ENCODE measurements at regions of chr14 and their contacts with region 1.

Region 1: DNA sequence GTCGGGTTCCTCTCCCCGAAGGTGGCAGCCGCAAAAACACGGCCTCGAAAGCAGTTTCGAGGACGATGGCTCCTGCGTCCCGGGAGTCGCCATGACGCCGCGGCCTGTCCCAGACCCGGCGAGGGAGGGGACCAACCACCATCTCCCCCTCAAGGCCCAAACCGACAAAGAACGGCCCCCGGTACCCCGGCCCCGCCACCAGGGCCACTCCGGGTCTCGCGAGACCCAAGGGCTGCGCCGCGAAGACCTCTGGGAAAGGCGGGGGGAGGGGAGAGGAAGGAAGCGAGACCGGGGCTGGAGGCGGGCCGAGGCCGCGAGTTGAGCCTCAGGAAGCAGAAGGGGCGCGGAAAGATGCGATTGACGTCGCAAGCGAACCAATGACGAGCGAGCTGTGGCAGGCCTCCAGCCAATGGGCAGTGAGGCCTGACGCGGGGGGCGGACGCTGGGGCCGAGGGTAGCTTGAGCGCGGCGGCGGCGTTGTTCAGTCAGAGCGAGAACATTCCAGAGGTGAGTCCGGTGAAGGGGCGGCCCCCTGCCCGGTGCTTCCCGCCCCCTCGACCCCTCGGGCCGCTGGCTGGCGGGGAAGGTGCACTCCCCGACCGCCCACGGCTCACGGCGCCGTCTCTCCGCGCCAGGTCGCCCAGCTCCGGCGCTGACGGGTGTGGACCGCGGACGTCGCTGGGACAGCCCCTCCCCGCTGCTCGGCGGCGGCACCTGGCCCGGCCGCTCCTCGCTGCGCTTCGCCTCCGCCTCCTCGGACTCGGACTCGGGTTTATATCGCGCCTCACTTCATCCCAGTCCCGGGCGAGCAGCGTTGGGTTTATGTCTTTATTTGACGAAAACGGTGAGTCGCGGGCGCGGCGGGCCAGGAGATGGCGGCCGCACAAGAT is at the start of gene EIF5:
- DNase-seq: peak; percentile 98
- H3K4me3 Mint-ChIP-seq: peak within 1 kb of the TSS; percentile 90
- H3K27ac Mint-ChIP-seq: peak within 1 kb of the TSS; percentile 97
- H3K4me1 Mint-ChIP-seq: peaks cover 43% of the 10 kb centered on the region
- H3K27me3 Mint-ChIP-seq: peaks cover 7% of the 10 kb centered on the region
- total RNA-seq, gene EIF5: 279 and 292 TPM in 2 replicates

Region 2: DNA sequence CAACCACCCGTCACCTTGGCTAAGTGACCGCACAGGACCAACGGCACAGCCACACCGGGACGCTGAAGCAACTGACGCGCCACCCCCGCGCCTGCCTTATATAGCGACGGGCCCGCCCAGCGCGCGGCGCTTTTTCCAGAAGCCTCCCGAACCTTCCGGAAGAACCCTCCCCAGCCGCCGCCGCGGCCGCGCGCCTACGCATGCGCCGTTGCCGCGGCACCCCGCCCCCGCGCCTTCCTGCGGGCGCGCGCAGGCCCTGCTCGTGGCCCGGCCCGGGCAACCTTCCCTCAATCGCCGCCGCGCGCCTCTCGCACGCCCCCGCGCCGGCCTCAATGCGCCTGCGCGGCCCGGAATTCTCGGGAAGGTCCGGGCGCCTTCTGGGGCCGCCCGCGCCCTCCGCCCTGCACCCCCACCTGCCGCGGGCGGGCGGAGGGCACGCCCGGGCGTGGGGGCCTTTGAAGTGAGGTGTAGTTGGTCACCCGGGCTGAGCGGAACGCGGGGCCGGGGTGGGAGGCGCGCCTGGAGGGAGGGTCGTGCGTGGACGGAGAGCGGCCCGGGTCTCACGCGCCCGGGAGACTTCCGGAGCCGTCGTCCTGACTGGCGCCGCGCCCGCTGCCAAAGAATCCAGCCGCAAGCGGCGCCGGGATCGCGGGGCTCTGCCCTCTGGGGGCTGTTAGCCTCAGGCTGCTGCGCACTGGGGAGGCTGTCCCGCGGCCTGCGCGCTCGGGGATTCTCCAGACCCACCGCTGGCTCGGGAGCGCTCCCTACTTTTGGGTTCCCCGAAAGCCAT is 1246.8 kb before region 1 on chr14 and contains the start of gene HSP90AA1:
- intact Hi-C with region 1: loop called (anchors 2 kb)
- DNase-seq: peak; percentile 94
- H3K4me3 Mint-ChIP-seq: peak within 1 kb of the TSS; percentile 99
- H3K27ac Mint-ChIP-seq: peak within 1 kb of the TSS; percentile 97
- H3K4me1 Mint-ChIP-seq: peaks cover 63% of the 10 kb centered on the region
- H3K27me3 Mint-ChIP-seq: no peaks in the 10 kb centered on the region
- total RNA-seq, gene HSP90AA1: 993 and 995 TPM in 2 replicates

Region 3: GRCh38 chr14:102362545-102363181 is 971.3 kb before region 1 on chr14 and contains the starts of genes CINP and TECPR2:
- intact Hi-C with region 1: loop called (anchors 1 kb)
- DNase-seq: peak; percentile 92
- H3K4me3 Mint-ChIP-seq: peak within 1 kb of the TSS; percentile 93
- H3K27ac Mint-ChIP-seq: peak within 1 kb of the TSS; percentile 91
- H3K4me1 Mint-ChIP-seq: peaks cover 32% of the 10 kb centered on the region
- H3K27me3 Mint-ChIP-seq: no peaks in the 10 kb centered on the region
- total RNA-seq, gene CINP: 39.6 and 42.5 TPM in 2 replicates
- total RNA-seq, gene TECPR2: 9.5 and 10.1 TPM in 2 replicates

Region 4: DNA sequence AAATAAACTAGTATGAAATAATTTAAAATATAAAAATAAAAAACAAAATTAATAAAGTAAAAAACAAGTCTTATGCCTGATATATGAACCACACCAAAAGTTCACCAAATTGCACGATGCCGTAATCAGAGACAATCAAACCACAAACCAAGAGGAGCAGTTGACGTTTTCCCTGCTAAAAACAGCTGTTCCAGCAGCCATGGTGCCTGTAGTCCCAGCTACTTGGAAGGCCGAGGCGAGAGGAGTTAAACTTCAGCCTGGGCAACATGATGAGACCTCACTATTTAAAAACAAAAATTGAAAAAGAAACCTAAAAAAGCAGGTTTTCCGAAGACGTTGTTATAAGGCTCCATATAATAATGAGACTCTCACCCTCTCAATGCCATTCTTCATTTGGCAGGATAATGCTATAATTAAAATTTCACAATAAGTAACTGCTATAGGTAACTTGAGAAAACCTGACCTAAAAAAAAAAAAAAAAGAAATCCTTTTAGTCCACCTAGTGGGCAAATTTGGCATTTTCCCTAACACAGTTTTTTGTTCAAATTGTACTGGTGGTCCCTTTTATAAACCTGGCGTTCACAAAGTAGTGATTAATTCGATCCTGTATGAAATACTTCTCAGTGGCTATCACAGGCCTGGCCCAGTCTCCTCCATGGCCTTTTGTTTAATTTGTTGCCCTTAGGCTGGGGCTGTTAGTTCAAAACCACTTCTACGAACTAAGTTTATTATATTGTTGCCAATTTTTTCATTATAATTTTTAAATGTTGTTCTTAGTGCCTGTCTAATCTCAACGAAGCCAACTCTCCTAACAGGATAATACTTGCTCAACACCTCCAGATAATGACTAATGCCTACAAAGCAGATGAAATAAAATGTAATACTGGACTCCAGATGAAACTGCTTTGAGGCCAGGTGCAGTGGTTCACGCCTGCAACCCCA is 148.7 kb before region 1 on chr14:
- intact Hi-C with region 1: no loop called
- DNase-seq: no peak
- H3K4me3 Mint-ChIP-seq: no peak overlapping the region
- H3K27ac Mint-ChIP-seq: no peak overlapping the region
- H3K4me1 Mint-ChIP-seq: no peaks in the 10 kb centered on the region
- H3K27me3 Mint-ChIP-seq: peaks cover 40% of the 10 kb centered on the region

Region 5: GRCh38 chr14:103343905-103344797 is 10.2 kb after region 1 on chr14:
- intact Hi-C with region 1: loop called (anchors 1 kb)
- DNase-seq: no peak
- H3K4me3 Mint-ChIP-seq: no peak overlapping the region
- H3K27ac Mint-ChIP-seq: no peak overlapping the region
- H3K4me1 Mint-ChIP-seq: peaks cover 7% of the 10 kb centered on the region
- H3K27me3 Mint-ChIP-seq: no peaks in the 10 kb centered on the region

Region 6: DNA sequence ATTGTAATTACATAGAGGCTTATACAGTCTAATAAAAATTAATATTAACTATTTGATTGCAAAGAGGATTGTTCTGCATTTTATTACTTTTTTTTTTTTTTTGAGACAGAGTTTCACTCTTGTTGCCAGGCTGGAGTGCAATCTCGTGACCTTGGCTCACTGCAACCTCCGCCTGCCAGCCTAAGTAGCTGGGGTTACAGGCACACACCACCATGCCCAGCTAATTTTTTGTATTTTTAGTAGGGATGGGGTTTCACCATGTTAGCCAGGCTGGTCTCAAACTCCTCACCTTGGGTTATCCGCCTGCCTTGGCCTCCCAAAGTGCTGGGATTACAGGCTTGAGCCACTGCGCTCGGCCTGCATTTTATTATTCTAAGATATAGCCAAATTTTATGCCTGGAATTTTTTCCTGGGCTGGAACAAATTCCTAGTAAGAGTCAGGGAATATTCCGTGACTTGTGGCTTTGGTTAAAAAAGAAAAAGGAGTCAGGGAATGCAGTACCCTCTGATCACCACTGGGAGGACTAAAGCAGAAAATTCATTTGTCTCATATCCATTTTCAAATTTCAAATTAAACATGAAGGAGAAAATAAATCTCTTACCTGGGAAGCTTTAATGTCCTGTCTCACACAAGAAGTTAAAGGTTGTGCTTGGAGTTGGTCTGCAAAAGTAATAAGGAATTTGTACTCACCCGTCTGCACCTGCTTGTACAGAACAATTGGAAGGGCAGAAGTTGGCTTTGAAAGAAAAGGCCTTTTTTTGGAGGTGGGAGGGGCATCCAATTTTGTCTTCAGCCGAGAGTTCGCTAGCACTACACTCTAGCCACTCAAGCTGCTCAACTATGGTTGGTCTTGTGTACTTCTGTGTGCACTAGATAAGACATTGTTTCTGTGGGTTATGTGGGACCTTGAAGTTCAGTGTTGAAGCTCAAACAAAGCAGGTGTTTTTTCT is 60.0 kb after region 1 on chr14:
- intact Hi-C with region 1: loop called (anchors 2 kb)
- DNase-seq: no peak
- H3K4me3 Mint-ChIP-seq: peak overlapping the region; percentile 0
- H3K27ac Mint-ChIP-seq: no peak overlapping the region
- H3K4me1 Mint-ChIP-seq: peaks cover 43% of the 10 kb centered on the region
- H3K27me3 Mint-ChIP-seq: no peaks in the 10 kb centered on the region

Region 7: DNA sequence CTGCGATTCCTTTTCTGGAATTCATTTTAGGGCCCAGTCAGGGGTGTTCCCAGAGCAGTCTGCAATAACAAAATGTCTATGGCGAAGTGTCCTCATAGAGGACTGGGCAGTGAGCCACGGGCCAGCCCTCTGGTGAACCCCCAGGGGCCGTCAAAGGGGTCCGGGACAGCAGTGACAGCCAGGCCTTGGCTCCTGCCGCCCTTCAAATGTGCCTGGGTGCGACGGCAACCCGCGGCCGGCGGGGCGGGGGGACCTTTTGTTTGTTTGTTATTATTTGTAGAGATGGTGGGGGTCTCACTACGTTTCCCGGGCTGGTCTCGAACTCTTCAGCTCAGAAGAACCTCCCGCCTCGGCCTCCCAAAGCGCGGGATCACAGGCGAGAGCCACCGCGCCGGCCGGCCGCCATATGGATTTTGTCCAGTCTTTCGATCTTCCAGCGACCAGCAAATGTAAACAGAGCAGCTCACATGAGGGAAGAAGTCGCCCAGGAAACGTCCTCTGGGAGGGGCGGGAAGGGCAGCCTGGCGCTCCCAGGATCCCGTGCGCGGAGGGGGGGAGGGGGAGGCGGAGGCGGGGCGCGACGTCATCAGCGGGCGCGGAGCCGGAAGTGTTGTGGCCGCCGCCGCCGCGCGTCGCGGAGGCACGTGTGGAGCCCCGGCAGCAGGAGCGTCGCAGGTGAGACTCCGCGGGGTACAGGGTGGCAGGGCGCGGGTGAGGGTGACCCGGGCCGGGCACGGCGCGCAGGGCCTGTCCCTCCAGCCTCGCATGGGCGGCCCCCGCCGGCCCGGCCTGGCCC is 194.8 kb after region 1 on chr14 and contains the start of gene TRMT61A:
- intact Hi-C with region 1: loop called (anchors 10 kb)
- DNase-seq: peak; percentile 66
- H3K4me3 Mint-ChIP-seq: peak within 1 kb of the TSS; percentile 99
- H3K27ac Mint-ChIP-seq: peak within 1 kb of the TSS; percentile 96
- H3K4me1 Mint-ChIP-seq: peaks cover 29% of the 10 kb centered on the region
- H3K27me3 Mint-ChIP-seq: peaks cover 8% of the 10 kb centered on the region
- total RNA-seq, gene TRMT61A: 23.4 and 23.7 TPM in 2 replicates

Region 8: DNA sequence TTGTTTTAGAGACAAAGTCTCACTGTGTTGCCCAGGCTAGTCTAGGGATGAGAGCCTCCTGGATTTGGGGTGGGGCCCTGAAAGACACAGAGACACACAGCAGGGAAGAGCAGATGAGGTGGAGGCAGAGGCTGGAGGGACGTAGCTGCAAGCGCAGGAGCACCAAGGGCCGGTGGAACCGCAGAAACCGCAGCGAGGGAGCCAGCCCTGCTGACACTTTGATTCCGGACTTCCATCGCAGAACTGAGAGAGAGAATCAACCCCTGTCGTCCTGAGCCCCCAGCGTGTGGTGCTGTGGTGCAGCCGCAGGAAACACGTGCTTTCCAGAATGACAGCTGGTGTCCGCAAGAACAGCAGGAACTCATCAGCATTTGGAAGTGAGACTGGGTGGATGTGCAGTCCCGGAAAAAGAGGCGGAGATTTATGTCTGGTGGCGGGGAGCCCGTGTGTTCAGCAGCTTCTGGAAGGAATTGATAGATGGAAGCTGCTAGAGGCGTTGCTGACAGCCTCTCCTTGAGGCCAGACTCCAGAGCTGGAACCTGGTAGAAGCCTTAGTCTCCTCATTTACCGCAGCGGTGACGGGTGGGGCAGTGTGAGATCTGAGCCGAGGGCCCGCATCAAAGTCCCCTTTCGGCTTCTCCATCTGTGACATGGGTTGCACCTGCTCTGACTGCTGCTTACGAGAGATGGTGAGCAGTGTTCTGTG is 273.1 kb after region 1 on chr14:
- intact Hi-C with region 1: no loop called
- DNase-seq: peak; percentile 57
- H3K4me3 Mint-ChIP-seq: peak overlapping the region; percentile 79
- H3K27ac Mint-ChIP-seq: peak overlapping the region; percentile 77
- H3K4me1 Mint-ChIP-seq: peaks cover 21% of the 10 kb centered on the region
- H3K27me3 Mint-ChIP-seq: peaks cover 17% of the 10 kb centered on the region

Region 9: DNA sequence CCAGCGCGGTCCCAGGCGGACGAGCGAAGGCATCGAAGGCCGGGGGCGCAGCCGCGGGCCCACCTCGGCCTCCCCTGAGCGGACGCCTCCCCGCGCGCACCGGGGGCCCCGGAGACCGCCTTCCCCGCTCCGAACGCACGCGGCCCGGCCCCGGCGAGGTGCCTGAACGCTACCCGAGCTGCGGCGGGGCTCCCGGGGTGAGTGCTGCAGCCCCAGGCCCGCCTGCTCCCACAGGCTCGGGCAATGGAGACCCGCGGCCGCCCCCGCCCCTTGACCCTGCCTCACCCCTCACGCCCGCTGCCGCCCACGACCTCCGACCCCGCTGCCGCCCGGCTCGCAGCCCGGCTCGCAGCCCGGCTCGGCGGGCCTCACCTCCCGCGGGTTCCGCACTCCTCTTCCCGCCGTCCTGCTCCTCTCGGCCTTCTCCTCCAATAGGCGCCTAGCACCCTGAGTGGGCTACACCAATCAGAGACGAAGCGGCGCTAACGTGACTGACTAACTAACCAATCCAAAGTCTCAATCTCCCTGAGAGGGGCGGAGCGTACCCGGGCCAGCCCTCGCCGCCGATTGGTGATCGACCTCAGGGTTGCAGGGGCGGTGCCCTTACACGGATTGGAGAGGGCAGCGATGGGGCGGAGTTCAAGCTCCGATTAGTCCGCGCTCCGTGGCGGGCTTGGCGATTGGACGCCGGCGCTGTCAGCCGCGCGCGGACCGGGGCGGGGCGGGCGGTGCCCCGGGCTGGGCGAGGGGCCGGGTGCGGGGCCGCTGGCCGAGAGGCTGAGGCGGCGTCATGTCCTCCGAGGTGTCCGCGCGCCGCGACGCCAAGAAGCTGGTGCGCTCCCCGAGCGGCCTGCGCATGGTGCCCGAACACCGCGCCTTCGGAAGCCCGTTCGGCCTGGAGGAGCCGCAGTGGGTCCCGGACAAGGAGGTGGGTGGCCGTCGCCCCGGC is 381.3 kb after region 1 on chr14 and contains the starts of genes XRCC3 and ZFYVE21:
- intact Hi-C with region 1: loop called (anchors 5 kb)
- DNase-seq: peak; percentile 100
- H3K4me3 Mint-ChIP-seq: peak within 1 kb of the TSS; percentile 93
- H3K27ac Mint-ChIP-seq: peak within 1 kb of the TSS; percentile 93
- H3K4me1 Mint-ChIP-seq: peaks cover 48% of the 10 kb centered on the region
- H3K27me3 Mint-ChIP-seq: no peaks in the 10 kb centered on the region
- total RNA-seq, gene XRCC3: 67.1 and 69.5 TPM in 2 replicates
- total RNA-seq, gene ZFYVE21: 21.5 and 24.7 TPM in 2 replicates

Measured in activated T-helper 1 cell treated with anti-CD3 and anti-CD28 coated beads, Interleukin-12 subunit alpha, Interleukin-12 subunit beta, Interleukin-2, Interleukin-4 antibody, amounts not matched to agents 30 ng/mL and 10 ng/mL and 1 ng/mL, durations not matched to agents 14 hours and 24 hours and 36 hours (primary cell).